Activated CD4-positive, alpha-beta memory T cell treated with anti-CD3 and anti-CD28 coated beads, Interleukin-2, amount 10 ng/mL, durations not matched to agents 7 days and 5 days (primary cell): ENCODE measurements at regions of chr1 and their contacts with region 1.

Region 1: GRCh38 chr1:244599937-244600350 is 53.0 kb upstream of the DESI2 start:
- DNase-seq: peak; percentile 65
- H3K4me3 Mint-ChIP-seq: peak overlapping the region; percentile 62
- H3K27ac Mint-ChIP-seq: peak overlapping the region; percentile 79
- H3K4me1 Mint-ChIP-seq: peaks cover 19% of the 10 kb centered on the region
- H3K27me3 Mint-ChIP-seq: peaks cover 15% of the 10 kb centered on the region

Region 2: GRCh38 chr1:244615301-244615700 is 15.4 kb after region 1 on chr1:
- CTCF ChIA-PET with region 1: interaction called, 10 read pairs
- POLR2A ChIA-PET with region 1: no interaction called
- DNase-seq: no peak
- H3K4me3 Mint-ChIP-seq: no peak overlapping the region
- H3K27ac Mint-ChIP-seq: no peak overlapping the region
- H3K4me1 Mint-ChIP-seq: no peaks in the 10 kb centered on the region
- H3K27me3 Mint-ChIP-seq: peaks cover 7% of the 10 kb centered on the region

Region 3: GRCh38 chr1:244636488-244637259 is 36.7 kb after region 1 on chr1:
- CTCF ChIA-PET with region 1: no interaction called
- POLR2A ChIA-PET with region 1: no interaction called
- DNase-seq: no peak
- H3K4me3 Mint-ChIP-seq: no peak overlapping the region
- H3K27ac Mint-ChIP-seq: no peak overlapping the region
- H3K4me1 Mint-ChIP-seq: peaks cover 6% of the 10 kb centered on the region
- H3K27me3 Mint-ChIP-seq: peaks cover 15% of the 10 kb centered on the region

Region 4: DNA sequence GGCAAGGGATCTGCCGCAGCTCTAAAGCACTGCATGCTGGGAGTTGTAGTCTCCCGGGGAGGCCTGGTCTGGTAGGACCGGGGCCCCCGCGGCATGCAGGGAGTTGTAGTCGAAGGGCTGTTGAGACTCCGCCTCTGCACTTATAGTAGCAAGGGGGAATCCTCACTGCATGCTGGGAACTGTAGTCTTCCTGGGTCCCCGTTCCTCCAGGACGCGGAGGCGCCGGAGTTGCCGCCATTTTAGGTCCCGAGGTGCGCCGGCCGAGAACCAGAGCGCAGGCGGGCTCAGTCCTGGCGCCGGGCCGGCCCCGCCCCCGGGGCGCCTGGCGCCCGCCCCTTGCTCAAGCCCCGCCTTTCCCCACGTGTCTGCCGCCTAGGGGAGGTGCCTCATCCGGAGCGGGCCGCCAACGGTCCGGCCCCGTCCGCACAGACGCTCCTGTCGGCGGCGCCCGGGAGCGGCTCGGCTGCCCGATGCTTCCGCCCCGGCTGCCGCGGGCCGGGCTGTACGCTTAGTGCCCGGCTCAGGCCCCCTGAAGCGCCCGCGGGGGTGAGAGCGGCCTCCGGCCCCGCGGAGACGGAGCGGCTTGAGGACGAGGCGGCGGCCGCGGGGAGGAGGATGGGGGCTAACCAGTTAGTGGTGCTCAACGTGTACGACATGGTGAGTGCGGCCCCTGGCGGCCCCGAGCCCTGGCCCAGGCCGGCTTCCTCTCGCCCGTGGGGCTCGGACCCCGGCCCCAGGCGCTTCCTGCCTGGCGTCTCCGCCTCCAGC is 52.9 kb after region 1 on chr1 and contains the start of gene DESI2:
- CTCF ChIA-PET with region 1: interaction called, 6 read pairs
- POLR2A ChIA-PET with region 1: interaction called, 11 read pairs
- DNase-seq: peak; percentile 98
- H3K4me3 Mint-ChIP-seq: peak within 1 kb of the TSS; percentile 76
- H3K27ac Mint-ChIP-seq: peak within 1 kb of the TSS; percentile 79
- H3K4me1 Mint-ChIP-seq: peaks cover 15% of the 10 kb centered on the region
- H3K27me3 Mint-ChIP-seq: peaks cover 4% of the 10 kb centered on the region
- total RNA-seq, gene DESI2: 26.6 to 31.4 TPM

Region 5: DNA sequence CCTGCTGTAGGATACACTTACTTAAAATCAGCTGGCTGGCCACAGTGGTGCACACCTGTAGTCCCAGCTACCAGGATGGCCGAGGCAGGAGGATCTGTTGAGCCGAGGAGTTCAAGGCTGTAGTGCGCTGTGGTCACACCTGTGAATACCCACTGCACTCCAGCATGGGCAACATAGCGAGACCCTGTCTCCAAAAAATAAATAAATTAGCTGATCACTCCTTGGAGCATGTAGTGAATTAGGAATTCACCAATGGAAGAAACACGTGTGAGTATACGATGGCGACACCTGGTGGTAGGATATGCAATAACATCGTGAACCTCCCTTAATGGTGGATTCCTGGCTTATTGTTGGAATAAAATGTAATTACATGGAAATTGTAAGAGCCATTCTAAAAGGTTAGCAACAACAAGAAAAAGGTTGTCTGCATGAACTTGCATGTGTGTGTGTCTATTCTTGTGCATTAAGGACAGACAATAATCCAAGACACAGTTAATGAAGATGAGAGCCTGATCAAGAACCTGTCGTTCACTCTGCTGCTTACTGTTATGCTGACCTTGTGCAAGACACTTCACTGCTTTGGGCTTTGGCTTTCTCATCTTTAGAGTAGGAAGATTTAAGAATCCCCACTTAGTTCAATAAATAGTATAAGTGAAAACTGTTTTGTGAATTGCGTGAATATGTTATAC is 196.9 kb after region 1 on chr1:
- CTCF ChIA-PET with region 1: interaction called, 77 read pairs
- POLR2A ChIA-PET with region 1: interaction called, 3 read pairs
- DNase-seq: peak; percentile 47
- H3K4me3 Mint-ChIP-seq: no peak overlapping the region
- H3K27ac Mint-ChIP-seq: no peak overlapping the region
- H3K4me1 Mint-ChIP-seq: peaks cover 5% of the 10 kb centered on the region
- H3K27me3 Mint-ChIP-seq: peaks cover 2% of the 10 kb centered on the region